Psoas muscle (tissue), 8 donors: ENCODE measurements at regions of chr11 and their contacts with region 1.

Region 1: DNA sequence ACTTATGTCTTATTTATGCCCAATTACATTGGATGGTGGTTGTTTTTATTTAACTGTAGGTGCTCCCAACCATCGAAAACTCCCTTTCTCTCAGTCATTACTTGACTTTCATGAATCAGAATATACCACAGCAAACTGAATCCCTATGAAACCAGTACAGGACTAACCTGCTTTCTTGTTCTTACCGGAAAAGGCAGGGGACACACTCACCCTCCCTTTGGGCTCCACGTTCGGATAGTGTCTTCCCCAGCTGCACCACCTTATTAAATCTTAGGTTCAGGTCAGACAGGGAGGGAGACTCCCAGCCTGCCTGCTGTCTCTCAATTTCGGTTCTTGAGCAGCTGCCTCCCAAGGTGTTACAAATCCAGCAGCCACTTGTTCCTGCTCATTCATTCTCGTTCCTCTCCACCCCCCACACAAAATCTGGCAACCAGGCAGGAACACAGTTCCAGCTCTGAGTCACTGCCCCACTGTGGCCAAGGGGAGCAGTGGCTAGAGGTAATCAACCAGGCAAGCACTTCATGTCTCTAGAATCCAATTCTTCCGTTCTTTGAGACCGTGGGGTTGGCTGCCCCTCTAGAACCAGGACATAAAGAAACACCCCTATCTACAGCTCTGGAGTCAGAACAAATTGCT is 133.0 kb downstream of the PLEKHA7 start:
- DNase-seq: peak; percentile 61 to 79
- ATAC-seq: peak; percentile 96 to 100 (median 98)
- H3K4me3 ChIP-seq: no peak overlapping the region
- H3K27ac ChIP-seq: no peak overlapping the region
- H3K4me1 ChIP-seq: peaks cover 8% of the 10 kb centered on the region
- H3K27me3 ChIP-seq: no peaks in the 10 kb centered on the region
- CTCF ChIP-seq: peak; percentile 38

Region 2: DNA sequence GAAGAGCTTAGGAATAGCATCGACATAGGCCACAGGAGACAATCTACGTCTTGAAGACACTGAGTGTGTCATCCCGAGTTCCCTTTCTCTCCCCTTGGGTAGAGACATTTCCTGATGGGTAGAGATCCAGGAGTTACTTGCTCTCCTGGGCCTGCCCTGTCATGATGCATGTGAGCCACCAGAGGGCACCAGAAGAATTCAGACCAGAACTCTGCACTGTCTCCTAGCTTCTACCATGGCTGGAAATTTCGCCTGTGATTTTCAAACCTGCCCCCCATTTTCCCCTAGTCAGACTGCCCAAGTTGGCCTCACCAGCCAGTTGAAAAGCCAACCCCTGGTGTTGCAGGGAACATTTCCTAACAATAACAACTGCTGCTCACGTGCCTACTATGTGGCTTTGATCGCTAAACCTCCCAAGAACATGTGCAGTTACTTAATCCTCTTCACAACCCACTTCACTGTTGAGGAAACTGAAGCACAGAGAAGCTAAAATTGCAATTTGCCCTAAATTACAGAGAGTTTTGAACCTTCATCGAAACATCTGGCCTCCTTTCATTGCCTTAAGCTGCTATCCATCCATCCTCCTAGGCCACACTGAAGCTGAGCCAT is 95.6 kb before region 1 on chr11:
- intact Hi-C with region 1: loop called (anchors 2 to 10 kb)
- DNase-seq: peak in 1 of 2 donors; percentile 59
- ATAC-seq: peak; percentile 71 to 88 (median 81)
- H3K4me3 ChIP-seq: no peak overlapping the region
- H3K27ac ChIP-seq: no peak overlapping the region
- H3K4me1 ChIP-seq: peaks cover 8% of the 10 kb centered on the region
- H3K27me3 ChIP-seq: no peaks in the 10 kb centered on the region
- CTCF ChIP-seq: peak; percentile 92

Region 3: DNA sequence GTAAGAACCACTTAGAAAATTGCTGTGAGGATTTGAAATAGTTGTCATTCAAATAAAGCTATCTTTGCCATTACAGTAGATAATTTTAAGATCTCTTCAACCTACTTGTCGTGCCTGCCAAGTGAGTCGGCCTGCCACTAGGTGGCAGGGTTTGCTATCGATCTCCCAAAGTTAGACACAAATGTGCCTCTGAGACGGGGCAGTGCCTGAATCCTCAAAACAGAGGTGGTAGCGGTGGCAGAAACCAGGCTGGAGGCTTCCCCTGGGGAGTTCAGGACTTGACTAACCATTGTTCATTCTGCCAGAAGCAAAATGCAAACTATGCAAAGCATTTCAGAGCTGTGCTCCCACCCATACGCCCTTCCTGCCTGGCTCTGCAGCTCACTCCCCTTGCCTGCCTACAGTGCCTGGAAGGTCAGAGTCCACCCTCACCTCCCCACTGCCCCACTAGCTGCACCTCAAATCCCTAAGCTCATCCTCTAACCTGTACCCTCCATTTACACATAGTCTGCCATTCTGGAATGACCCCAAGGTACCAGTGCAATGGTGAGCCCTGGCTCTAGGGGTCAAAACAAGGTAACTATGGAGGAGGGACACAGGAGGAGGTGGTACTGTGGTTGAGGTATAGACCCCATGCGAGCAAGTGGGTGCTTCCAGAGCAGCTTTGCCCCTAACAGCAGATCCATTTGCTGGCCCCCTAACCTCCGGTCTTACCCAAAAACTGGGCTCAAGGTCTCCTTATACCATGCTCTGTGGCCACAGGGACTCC is 60.7 kb before region 1 on chr11:
- intact Hi-C with region 1: loop called (anchors 2 kb)
- DNase-seq: peak; percentile 75 to 86
- ATAC-seq: peak; percentile 74 to 90 (median 82)
- H3K4me3 ChIP-seq: no peak overlapping the region
- H3K27ac ChIP-seq: no peak overlapping the region
- H3K4me1 ChIP-seq: peaks cover 8% of the 10 kb centered on the region
- H3K27me3 ChIP-seq: no peaks in the 10 kb centered on the region
- CTCF ChIP-seq: peak; percentile 88

Region 4: DNA sequence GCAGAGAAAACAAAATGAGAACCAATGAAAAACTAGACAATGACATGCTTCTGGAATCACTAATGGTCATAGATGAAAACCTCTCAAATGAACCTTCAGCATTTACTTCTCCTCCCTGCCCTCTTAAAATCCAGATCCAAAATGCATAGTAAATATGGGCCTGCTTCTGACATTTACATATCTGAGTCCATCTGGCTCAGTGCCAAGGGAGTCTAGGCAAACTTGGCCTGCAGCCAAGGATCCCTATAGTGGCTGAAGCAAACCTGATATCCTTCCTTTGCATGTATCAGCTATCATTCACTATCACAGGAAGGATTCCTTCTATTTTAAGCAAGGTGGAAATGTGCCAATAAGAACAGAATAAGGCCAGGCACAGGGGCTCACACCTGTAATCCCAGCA is 37.9 kb before region 1 on chr11:
- intact Hi-C with region 1: no loop called
- DNase-seq: no peak
- ATAC-seq: no peak
- H3K4me3 ChIP-seq: no peak overlapping the region
- H3K27ac ChIP-seq: no peak overlapping the region
- H3K4me1 ChIP-seq: no peaks in the 10 kb centered on the region
- H3K27me3 ChIP-seq: no peaks in the 10 kb centered on the region
- CTCF ChIP-seq: no peak